Right lobe of liver (tissue), 6 donors: ENCODE measurements at regions of chr2 and their contacts with region 1.

Region 1: DNA sequence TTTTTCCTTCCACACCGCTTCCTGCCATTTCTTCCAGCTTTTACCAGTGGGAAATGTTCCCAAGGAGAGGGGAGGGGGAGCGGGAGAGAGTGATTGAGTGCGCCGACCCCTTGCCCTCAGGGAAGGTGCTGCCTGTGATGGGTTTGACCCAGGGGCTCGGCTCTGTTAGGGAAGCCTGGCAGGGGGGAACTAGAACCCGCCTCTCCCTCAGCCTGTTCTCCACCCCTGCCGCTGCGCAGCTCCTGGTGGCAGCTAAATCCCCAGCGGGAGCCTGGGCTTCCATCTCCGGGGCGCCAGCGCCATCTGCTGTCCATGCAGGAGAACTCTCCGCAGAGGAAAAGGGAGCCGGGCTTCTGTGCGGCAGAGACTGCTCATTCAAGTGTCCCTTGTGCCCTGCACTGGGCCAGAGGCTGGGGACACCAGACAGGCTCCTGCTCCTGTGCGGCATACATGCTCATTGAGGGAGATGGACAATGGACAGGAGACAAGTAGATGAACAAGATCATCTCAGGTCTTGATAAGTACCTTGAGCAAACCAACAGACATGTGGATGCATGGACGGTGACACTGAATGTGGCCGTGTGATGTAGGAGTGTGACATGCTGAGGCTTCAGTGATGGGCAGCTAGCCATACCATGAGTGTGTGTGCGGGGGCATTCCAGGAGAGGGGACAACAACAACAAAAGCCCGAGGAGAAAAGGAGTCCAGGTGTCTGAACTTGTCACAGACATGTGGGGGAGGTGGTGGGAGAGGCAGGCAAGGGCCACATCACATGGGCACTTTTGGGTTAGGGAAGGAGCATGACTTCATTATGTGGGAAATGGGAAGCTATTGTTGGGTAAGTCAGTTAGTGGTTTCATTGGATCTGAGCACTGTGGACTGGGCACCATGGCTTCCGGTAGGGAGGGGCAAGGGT is 13.3 kb downstream of the CHPF start:
- DNase-seq: peak; percentile 88 to 91 (median 90)
- ATAC-seq: peak; percentile 94 to 98 (median 96)
- H3K4me3 ChIP-seq: no peak overlapping the region
- H3K27ac ChIP-seq: no peak overlapping the region
- H3K4me1 ChIP-seq: no peaks in the 10 kb centered on the region
- H3K27me3 ChIP-seq: no peaks in the 10 kb centered on the region
- CTCF ChIP-seq: peak; percentile 94 to 98 (median 97)
- POLR2A ChIP-seq: no peak

Region 2: GRCh38 chr2:219402665-219403515 is 127.4 kb before region 1 on chr2:
- intact Hi-C with region 1: loop called (anchors 5 to 10 kb)
- DNase-seq: peak in 2 of 3 donors; percentile 62
- ATAC-seq: peak; percentile 80 to 83 (median 81)
- H3K4me3 ChIP-seq: no peak overlapping the region
- H3K27ac ChIP-seq: no peak overlapping the region
- H3K4me1 ChIP-seq: peaks cover 0 to 15% (median 0%) of the 10 kb centered on the region in 4 donors
- H3K27me3 ChIP-seq: no peaks in the 10 kb centered on the region
- CTCF ChIP-seq: peak; percentile 76 to 88 (median 86)
- POLR2A ChIP-seq: no peak

Region 3: GRCh38 chr2:219475697-219476651 is 54.3 kb before region 1 on chr2:
- intact Hi-C with region 1: loop called (anchors 5 to 10 kb)
- DNase-seq: peak; percentile 71 to 76 (median 74)
- ATAC-seq: peak; percentile 84 to 96 (median 93)
- H3K4me3 ChIP-seq: no peak overlapping the region
- H3K27ac ChIP-seq: no peak overlapping the region
- H3K4me1 ChIP-seq: no peaks in the 10 kb centered on the region
- H3K27me3 ChIP-seq: no peaks in the 10 kb centered on the region
- CTCF ChIP-seq: peak; percentile 81 to 86 (median 84)
- POLR2A ChIP-seq: no peak

Region 4: DNA sequence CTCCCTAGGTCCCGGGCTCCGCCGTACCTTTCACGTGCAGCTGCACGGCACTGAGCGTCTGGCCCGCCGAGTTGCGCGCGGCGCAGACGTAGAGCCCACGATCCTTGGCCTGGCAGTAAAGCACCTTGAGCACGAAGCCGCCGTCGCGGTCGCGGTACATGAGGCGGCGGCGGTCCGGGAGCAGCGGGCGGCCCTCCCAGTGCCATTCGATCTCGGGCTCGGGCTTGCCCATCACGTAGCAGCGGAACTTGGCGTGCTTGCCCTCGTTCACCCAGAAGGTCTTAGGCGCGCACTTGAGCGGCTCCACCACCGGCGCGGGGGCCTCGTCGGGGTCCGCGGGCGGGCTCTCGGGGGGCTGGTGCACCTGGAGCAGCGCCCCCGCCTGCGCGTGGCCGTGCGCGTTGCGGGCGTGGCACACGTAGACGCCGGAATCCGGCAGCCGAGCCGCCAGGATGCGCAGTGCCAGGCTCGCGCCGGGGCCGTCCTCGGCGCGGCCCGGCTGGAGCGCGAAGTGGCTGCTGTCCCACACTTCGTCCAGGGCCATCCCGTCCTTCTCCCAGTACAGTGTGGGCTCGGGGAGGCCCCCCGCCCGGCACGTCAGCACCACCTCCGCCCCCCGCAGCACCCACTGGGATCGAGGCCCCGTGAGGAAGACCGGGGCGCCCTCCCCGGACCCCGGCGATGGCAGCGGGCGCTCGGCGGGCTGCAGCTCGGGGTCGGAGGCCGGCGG is 40.1 kb after region 1 on chr2:
- intact Hi-C with region 1: no loop called
- DNase-seq: no peak
- ATAC-seq: peak; percentile 57 to 66 (median 59)
- H3K4me3 ChIP-seq: peak overlapping the region; percentile 60 to 76 (median 60)
- H3K27ac ChIP-seq: peak overlapping the region in 2 of 3 donors; percentile 51 to 57
- H3K4me1 ChIP-seq: peaks cover 0 to 5% (median 1%) of the 10 kb centered on the region in 4 donors
- H3K27me3 ChIP-seq: no peaks in the 10 kb centered on the region
- CTCF ChIP-seq: no peak
- POLR2A ChIP-seq: peak; percentile 23

Region 5: GRCh38 chr2:219633276-219634065 is 103.2 kb after region 1 on chr2:
- intact Hi-C with region 1: no loop called
- DNase-seq: peak in 1 of 3 donors; percentile 18
- ATAC-seq: no peak
- H3K4me3 ChIP-seq: no peak overlapping the region
- H3K27ac ChIP-seq: no peak overlapping the region
- H3K4me1 ChIP-seq: no peaks in the 10 kb centered on the region
- H3K27me3 ChIP-seq: no peaks in the 10 kb centered on the region
- CTCF ChIP-seq: no peak
- POLR2A ChIP-seq: no peak